AG04450 (cell line): ENCODE measurements at regions of chr1 and their contacts with region 1.

Region 1: DNA sequence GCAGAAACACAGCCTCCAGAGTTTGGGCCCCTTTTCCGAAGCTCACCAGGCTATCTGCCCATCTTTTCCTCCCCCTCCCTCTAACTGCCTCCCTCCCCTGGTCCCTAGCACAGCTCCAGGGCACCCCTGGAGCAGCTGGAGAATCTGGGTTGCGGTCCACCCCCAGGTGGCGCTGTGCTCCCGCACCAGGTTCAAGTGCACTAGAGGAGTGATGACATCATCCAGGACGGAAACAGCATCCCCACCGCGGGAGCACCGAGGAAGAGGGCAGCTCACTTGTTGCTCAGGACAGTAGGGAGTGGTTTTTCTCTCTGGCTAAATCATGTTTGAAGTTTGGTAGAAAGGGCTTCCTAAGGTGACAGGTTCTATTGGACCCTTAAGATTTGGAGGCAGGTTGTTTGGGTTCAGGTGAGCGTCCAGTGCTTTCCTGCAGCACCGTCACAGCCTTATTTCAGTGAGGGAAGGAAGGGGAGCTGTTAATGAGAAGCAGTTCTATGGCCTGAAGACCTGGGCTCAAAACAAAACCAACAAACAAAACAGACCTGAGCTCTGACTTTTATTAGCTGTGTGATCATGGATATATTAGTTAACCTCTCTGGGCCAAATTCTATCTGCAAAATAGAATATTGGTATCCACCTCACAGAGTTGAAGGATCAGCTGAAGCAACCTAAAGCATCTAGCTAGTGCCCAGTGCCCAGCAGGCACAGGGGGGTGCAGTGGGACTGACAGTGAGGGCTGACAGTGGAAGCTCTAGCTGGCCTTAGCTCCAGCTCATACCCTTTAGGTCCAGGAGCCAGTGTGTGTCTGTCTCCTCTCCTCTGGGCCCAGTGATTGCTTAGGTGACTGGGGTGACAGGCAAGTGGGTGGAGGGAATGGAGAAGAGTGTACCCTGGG is 7.5 kb downstream of the SHISA4 start:
- DNase-seq: peak; percentile 82
- H3K4me3 ChIP-seq: no peak overlapping the region
- H3K27ac ChIP-seq: peak overlapping the region; percentile 65
- H3K27me3 ChIP-seq: no peaks in the 10 kb centered on the region
- CTCF ChIP-seq: peak; percentile 98

Region 2: DNA sequence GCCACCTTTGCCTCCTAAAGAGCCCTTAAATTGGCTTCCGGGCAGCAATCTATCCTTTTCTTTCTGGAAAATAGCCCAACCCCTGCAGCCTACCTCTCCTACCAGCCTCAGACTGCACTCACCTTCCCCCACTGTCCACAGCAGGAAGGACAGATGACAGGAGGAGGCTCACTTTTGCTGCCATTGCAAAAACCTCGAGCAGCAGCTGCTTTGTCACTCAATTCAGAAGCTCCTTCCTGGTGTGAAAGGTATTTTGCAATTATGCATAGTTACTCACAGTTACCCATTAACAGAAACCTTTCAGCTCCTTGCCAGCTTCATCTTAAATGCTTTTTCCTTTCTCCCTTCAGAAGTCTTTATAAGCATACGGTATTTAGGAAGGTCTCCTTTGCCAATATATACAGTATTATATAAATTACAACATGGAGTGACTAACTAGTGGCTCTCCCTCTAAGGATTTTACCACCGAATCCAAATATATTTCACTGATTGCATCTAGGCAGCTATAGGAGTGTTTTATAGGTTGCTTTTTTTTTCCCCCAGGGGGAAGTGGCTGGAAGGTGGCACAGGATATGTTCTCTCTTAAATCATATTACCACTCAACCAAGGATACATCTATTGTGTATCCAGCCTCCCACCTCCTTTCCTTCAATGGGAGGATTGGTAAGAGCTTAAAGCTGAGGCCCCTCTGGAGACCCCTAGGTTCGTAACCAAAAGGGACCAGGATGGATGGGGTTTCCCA is 209.3 kb before region 1 on chr1:
- CTCF ChIA-PET with region 1: no interaction called
- POLR2A ChIA-PET with region 1: no interaction called
- DNase-seq: no peak
- H3K4me3 ChIP-seq: no peak overlapping the region
- H3K27ac ChIP-seq: no peak overlapping the region
- H3K27me3 ChIP-seq: no peaks in the 10 kb centered on the region
- CTCF ChIP-seq: no peak

Region 3: DNA sequence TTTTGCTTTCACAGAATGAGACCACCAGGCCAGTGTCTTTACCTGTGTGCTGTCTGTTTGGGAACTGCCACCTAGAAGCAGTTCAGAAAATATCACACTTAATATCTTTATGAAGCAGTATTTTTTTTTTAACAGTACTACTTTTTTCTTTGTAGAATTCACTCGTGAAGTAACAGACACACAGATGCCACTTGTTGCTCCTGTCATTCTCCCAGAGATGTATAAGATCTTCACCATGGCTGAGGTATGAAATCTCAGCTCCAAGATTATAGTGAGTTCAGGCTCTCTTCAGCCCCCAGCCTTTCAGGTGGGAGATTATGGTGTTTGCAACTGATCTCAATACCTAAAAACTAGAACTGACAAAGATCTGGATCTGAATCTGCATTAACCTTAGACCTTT is 44.2 kb before region 1 on chr1:
- CTCF ChIA-PET with region 1: no interaction called
- POLR2A ChIA-PET with region 1: no interaction called
- DNase-seq: no peak
- H3K4me3 ChIP-seq: no peak overlapping the region
- H3K27ac ChIP-seq: no peak overlapping the region
- H3K27me3 ChIP-seq: no peaks in the 10 kb centered on the region
- CTCF ChIP-seq: no peak

Region 4: GRCh38 chr1:201870397-201870796 is 25.8 kb before region 1 on chr1:
- CTCF ChIA-PET with region 1: interaction called, 15 read pairs
- POLR2A ChIA-PET with region 1: no interaction called
- DNase-seq: peak; percentile 55
- H3K4me3 ChIP-seq: no peak overlapping the region
- H3K27ac ChIP-seq: peak overlapping the region; percentile 31
- H3K27me3 ChIP-seq: no peaks in the 10 kb centered on the region
- CTCF ChIP-seq: no peak

Region 5: GRCh38 chr1:201885531-201886075 is 10.6 kb before region 1 on chr1:
- CTCF ChIA-PET with region 1: interaction called, 33 read pairs
- POLR2A ChIA-PET with region 1: interaction called, 12 read pairs
- DNase-seq: no peak
- H3K4me3 ChIP-seq: no peak overlapping the region
- H3K27ac ChIP-seq: no peak overlapping the region
- H3K27me3 ChIP-seq: no peaks in the 10 kb centered on the region
- CTCF ChIP-seq: no peak

Region 6: DNA sequence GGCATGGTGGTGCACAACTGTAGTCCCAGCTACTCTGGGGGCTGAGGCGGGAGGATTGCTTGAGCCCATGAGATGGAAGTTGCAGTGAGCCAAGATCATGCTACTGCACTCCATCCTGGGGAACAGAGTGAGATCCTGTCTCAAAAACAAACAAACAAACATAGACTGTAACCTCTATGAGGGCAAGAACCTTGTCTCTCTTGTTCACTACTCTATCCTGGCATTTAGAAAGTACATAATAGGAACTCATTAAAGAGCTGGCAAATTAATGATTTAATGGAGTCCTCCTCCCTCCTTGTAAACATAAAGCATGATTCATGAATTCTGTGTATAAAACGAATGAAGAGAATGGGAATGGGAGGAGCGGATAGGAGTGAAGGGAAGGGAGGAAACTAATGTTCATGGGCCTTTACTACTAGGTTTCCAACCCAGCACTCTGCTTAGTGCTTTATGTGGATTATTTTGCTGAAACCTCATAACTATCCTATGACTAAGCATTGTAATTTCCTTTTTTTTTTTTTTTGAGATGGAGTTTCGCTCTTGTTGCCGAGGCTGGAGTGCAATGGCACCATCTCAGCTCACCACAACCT is 41.6 kb after region 1 on chr1:
- CTCF ChIA-PET with region 1: interaction called, 90 read pairs
- POLR2A ChIA-PET with region 1: interaction called, 13 read pairs
- DNase-seq: peak; percentile 77
- H3K4me3 ChIP-seq: no peak overlapping the region
- H3K27ac ChIP-seq: peak overlapping the region; percentile 92
- H3K27me3 ChIP-seq: no peaks in the 10 kb centered on the region
- CTCF ChIP-seq: no peak

Region 7: GRCh38 chr1:201955009-201955728 is 59.0 kb after region 1 on chr1 and contains the start of gene TIMM17A:
- CTCF ChIA-PET with region 1: interaction called, 22 read pairs
- POLR2A ChIA-PET with region 1: interaction called, 9 read pairs
- DNase-seq: peak; percentile 96
- H3K4me3 ChIP-seq: peak within 1 kb of the TSS; percentile 98
- H3K27ac ChIP-seq: peak within 1 kb of the TSS; percentile 80
- H3K27me3 ChIP-seq: no peaks in the 10 kb centered on the region
- CTCF ChIP-seq: no peak
- polyA plus RNA-seq, gene TIMM17A: 75.2 and 104 TPM in 2 replicates

Region 8: DNA sequence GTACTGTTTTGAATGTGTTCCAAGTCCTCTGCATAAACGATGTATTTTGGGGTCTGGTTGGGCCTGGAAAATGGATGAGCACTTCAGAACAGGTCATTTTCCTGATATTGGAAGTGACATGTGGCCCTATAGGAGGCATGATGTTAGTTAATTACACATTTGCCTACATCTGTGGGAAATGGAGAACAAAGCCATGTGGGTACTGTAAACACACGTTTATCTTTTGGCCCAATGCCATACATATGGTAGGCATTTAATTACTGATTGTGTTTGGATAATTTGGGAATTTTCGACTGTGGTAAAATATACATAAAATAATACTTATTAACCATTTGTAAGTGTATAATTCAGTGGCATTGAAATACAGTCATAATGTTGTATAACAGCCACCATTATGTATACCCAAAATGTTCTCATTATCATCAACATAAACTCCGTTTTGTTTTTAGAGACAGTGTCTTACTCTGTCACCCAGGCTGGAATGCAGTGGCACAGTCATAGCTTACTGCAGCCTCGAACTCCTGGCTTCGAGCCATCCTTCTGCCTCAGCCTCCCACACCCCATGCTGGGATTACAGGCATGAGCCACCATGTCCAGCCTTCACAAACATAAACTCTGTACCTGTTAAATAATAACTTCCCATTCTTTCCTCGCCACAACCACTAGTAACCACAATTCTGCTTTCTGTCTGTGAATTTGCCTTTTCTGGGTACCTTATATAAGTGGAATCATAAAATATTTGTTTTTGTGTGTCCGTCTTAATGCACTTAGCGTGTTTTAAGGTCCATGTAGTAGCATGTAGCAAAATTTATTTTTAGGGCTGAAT is 74.4 kb after region 1 on chr1:
- CTCF ChIA-PET with region 1: interaction called, 225 read pairs
- POLR2A ChIA-PET with region 1: interaction called, 25 read pairs
- DNase-seq: no peak
- H3K4me3 ChIP-seq: no peak overlapping the region
- H3K27ac ChIP-seq: no peak overlapping the region
- H3K27me3 ChIP-seq: no peaks in the 10 kb centered on the region
- CTCF ChIP-seq: no peak

Region 9: GRCh38 chr1:202017749-202018467 is 121.7 kb after region 1 on chr1:
- CTCF ChIA-PET with region 1: no interaction called
- POLR2A ChIA-PET with region 1: no interaction called
- DNase-seq: no peak
- H3K4me3 ChIP-seq: no peak overlapping the region
- H3K27ac ChIP-seq: no peak overlapping the region
- H3K27me3 ChIP-seq: peaks cover 11% of the 10 kb centered on the region
- CTCF ChIP-seq: no peak

Region 10: GRCh38 chr1:202085682-202086404 is 189.7 kb after region 1 on chr1:
- CTCF ChIA-PET with region 1: no interaction called
- POLR2A ChIA-PET with region 1: no interaction called
- DNase-seq: no peak
- H3K4me3 ChIP-seq: no peak overlapping the region
- H3K27ac ChIP-seq: no peak overlapping the region
- H3K27me3 ChIP-seq: peaks cover 2% of the 10 kb centered on the region
- CTCF ChIP-seq: no peak